ENCODE measurements at regions of chr4 and their contacts with region 1.

Region 1: GRCh38 chr4:85474818-85475630 is at the start of gene ARHGAP24:
- DNase-seq: peak; percentile 96
- H3K4me3 ChIP-seq: peak within 1 kb of the TSS; percentile 84
- H3K27ac ChIP-seq: peak within 1 kb of the TSS; percentile 85
- H3K4me1 ChIP-seq: peaks cover 30% of the 10 kb centered on the region
- H3K27me3 ChIP-seq: no peaks in the 10 kb centered on the region
- total RNA-seq, gene ARHGAP24: 26.3 and 31.6 TPM in 2 replicates

Region 2: GRCh38 chr4:85147439-85148076 is 327.5 kb before region 1 on chr4:
- in situ Hi-C with region 1: no loop called
- DNase-seq: peak; percentile 78
- H3K4me3 ChIP-seq: no peak overlapping the region
- H3K27ac ChIP-seq: no peak overlapping the region
- H3K4me1 ChIP-seq: 0 out of 2 replicates have a peak, but pooled peaks cover 3% of the 10 kb centered on the region
- H3K27me3 ChIP-seq: 0 out of 2 replicates have a peak, but pooled peaks cover 3% of the 10 kb centered on the region

Region 3: GRCh38 chr4:85557016-85557901 is 82.2 kb after region 1 on chr4:
- in situ Hi-C with region 1: loop called (anchors 25 kb)
- DNase-seq: no peak
- H3K4me3 ChIP-seq: no peak overlapping the region
- H3K27ac ChIP-seq: no peak overlapping the region
- H3K4me1 ChIP-seq: no peaks in the 10 kb centered on the region
- H3K27me3 ChIP-seq: no peaks in the 10 kb centered on the region

Region 4: GRCh38 chr4:85747882-85748491 is 273.0 kb after region 1 on chr4:
- in situ Hi-C with region 1: loop called (anchors 25 kb)
- DNase-seq: peak; percentile 80
- H3K4me3 ChIP-seq: no peak overlapping the region
- H3K27ac ChIP-seq: 0 out of 2 replicates have a peak overlapping the region, but pooled peaks have one; percentile 21
- H3K4me1 ChIP-seq: peaks cover 18% of the 10 kb centered on the region
- H3K27me3 ChIP-seq: no peaks in the 10 kb centered on the region